Panc1 (cell line): ENCODE measurements at regions of chr12 and their contacts with region 1.

Region 1: GRCh38 chr12:45532113-45532512 is 197.4 kb upstream of the ARID2 start:
- DNase-seq: no peak
- ATAC-seq: no peak
- H3K4me3 ChIP-seq: no peak overlapping the region
- H3K27ac ChIP-seq: no peak overlapping the region
- H3K4me1 ChIP-seq: no peaks in the 10 kb centered on the region
- H3K27me3 ChIP-seq: peaks cover 2% of the 10 kb centered on the region; the same call in 1 of the 2 replicates
- CTCF ChIP-seq: no peak

Region 2: GRCh38 chr12:45423931-45424330 is 108.2 kb before region 1 on chr12:
- CTCF ChIA-PET with region 1: interaction called, 10 read pairs
- POLR2A ChIA-PET with region 1: no interaction called
- in situ Hi-C with region 1: no loop called
- intact Hi-C with region 1: no loop called
- DNase-seq: no peak
- ATAC-seq: no peak
- H3K4me3 ChIP-seq: no peak overlapping the region
- H3K27ac ChIP-seq: no peak overlapping the region
- H3K4me1 ChIP-seq: no peaks in the 10 kb centered on the region
- H3K27me3 ChIP-seq: no peaks in the 10 kb centered on the region
- CTCF ChIP-seq: no peak